ENCODE measurements at regions of chr16 and their contacts with region 1.

Region 1: GRCh38 chr16:11407047-11407982 is 62.1 kb downstream of the RMI2 start:
- DNase-seq: peak; percentile 81
- H3K4me3 Mint-ChIP-seq: no peak overlapping the region
- H3K27ac Mint-ChIP-seq: no peak overlapping the region
- H3K4me1 Mint-ChIP-seq: no peaks in the 10 kb centered on the region
- H3K27me3 Mint-ChIP-seq: peaks cover 11% of the 10 kb centered on the region
- CTCF ChIP-seq: peak; percentile 72

Region 2: DNA sequence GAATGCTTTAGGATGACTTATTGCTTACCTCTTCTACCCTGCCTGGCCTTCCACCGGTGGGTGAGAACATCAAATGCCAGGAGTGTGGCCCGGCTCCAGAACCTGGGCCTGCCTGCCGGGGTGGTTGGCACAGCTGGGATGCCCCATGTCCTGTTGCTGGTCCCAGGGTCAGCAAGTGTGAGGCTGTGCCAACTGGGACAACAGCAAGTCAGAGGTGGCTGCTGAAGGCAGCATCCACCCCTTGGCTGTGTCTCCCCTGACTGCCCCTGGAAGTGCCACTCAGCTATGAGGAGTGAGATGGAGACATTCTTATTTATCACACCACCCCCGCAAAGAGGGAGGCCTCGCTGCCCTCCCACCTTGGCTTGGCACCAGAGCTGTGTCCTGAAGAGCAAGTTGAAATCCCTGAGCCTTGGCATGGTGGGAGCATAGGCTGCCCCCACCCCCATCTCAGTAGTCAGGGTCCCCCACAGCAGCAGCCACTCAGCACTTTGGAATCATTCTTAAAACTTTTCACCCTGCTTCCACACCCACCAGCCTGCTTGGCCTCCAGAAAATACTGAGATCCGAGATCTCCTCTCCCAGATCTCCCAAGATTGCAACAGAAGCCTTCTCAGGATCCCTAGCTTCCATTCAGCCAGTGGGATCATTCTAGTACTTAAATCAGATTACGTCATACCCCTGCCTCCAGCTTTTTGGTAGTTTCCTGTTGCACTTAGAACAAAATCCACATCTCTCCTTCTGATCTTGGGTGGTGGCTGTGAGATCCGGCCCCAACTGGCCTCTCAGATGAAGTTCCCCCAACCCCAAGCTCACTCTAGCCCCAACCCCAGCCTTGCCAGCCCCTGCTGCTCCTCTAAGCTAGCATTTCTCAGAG is 278.8 kb before region 1 on chr16:
- CTCF ChIA-PET with region 1: no interaction called
- POLR2A ChIA-PET with region 1: no interaction called
- intact Hi-C with region 1: no loop called
- DNase-seq: peak; percentile 61
- H3K4me3 Mint-ChIP-seq: no peak overlapping the region
- H3K27ac Mint-ChIP-seq: peak overlapping the region; percentile 46
- H3K4me1 Mint-ChIP-seq: peaks cover 14% of the 10 kb centered on the region
- H3K27me3 Mint-ChIP-seq: no peaks in the 10 kb centered on the region
- CTCF ChIP-seq: no peak

Region 3: DNA sequence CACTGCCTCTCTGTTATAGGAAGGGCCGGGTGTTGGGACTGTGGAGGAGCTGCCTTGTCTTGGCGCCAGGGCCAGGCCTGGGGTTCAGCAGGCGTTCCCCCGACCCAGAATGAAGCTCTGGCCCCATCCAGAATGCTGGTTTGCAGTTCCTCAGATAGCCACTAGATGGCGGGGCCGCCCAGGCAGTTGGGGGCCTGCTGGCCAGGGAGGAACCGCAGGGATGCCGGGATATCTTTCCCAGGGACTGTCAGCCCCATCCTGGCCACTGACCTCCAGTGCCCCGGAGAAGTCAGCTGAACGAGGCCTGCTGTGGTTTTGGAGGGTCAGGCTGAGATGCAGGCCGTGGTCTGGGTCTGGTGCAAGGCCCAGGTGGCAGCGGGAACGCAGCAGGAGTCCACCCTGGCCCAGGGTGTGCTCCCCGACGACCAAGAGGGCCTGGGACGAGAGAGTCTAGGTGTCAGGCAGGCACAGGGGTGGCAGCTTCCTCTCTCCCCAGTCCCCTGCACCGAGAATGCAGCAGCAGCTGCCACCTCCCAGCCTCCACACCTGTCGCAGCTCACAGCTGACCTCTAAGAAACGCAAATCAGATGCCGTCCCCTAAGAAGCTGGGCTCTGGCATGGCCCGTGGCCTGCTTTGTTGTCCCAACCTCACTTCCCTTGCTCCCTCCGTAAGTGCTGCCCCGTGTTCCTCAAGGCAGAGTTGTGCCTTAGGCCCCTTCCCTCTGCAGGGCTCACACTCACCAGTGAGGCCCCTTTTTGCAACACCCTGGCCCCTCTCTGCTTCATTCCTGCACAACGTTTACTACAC is 10.9 kb before region 1 on chr16:
- CTCF ChIA-PET with region 1: interaction called, 70 read pairs
- POLR2A ChIA-PET with region 1: interaction called, 3 read pairs
- intact Hi-C with region 1: no loop called
- DNase-seq: peak; percentile 63
- H3K4me3 Mint-ChIP-seq: no peak overlapping the region
- H3K27ac Mint-ChIP-seq: no peak overlapping the region
- H3K4me1 Mint-ChIP-seq: no peaks in the 10 kb centered on the region
- H3K27me3 Mint-ChIP-seq: no peaks in the 10 kb centered on the region
- CTCF ChIP-seq: peak; percentile 99

Region 4: DNA sequence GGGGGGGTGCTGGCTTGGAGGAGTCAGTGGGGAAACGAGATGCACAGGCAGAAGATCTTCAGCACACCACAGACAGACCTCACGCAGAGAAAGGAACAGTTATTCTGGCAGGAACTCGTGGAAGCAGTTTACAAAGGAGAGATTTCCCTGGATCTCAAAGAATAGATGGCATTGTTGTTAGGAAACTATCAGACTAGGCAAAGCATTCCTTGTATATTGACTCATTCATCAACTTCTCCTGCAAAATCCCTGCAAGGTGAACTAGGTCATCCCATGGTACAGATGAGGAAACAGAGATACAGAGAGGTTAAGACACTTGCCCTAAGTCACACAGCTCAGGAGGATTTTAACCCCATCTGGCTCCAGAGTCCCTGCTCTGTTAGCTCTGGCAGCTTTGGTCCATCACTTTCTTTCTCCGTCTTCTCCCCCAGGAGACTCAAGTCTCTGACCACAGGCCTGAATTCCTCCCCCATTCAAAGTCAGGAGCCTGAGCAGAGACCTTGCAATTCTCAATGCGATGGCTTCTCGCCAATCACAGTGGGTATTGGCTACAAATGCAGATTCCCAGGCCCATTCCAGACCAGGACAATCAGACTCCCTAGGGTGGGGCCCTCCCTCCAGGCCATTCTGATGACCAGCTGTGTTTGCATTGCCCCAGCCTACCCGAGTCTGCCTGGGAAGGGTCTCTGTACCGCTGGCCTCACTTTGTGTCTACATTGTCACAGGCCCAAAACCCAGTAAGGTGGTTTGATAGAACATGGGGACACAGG is 123.0 kb after region 1 on chr16:
- CTCF ChIA-PET with region 1: interaction called, 36 read pairs
- POLR2A ChIA-PET with region 1: interaction called, 6 read pairs
- intact Hi-C with region 1: loop called (anchors 5 kb)
- DNase-seq: no peak
- H3K4me3 Mint-ChIP-seq: no peak overlapping the region
- H3K27ac Mint-ChIP-seq: no peak overlapping the region
- H3K4me1 Mint-ChIP-seq: peaks cover 16% of the 10 kb centered on the region
- H3K27me3 Mint-ChIP-seq: no peaks in the 10 kb centered on the region
- CTCF ChIP-seq: no peak

Region 5: DNA sequence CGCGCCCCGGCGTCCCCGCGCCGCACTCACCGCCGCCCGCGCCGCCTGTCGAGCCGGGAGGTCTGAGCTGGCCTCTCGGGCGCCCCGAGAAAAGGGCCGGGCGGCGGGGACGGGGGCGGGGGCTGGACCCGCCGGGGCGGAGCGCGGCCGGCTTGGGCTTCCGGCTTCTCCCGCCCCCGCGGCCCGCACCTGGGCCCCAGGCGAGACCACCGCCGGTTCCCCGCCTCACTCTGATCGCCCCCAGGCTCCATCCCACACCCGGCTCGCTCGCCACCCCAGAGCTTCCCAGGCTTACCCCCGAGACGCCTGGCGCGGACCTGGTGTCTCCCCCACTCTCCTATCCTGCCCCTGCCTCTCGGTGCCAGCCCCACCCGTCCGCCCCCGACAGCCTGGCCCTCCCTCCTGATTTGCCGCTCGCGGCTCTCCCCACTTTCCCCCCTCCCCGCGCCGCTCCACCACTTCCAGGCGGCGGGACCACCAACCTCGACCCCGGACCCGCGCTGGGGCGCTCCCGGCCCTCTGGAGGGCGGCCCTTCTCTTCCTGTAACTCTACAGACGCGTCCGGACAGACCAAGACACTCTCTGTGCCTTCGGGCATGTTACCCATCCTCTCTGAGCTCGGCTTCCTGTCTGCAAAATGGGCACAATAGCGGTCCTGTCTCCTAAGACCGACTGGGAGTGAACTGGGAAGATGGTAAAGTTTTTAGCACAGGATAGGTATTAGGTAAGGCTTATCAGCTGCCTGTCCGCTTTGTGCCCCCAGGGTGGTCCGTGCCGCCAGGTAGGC is 179.7 kb after region 1 on chr16 and contains the start of gene LITAF:
- CTCF ChIA-PET with region 1: interaction called, 9 read pairs
- POLR2A ChIA-PET with region 1: interaction called, 3 read pairs
- intact Hi-C with region 1: loop called (anchors 1 kb)
- DNase-seq: peak; percentile 66
- H3K4me3 Mint-ChIP-seq: peak within 1 kb of the TSS; percentile 84
- H3K27ac Mint-ChIP-seq: peak within 1 kb of the TSS; percentile 96
- H3K4me1 Mint-ChIP-seq: peaks cover 31% of the 10 kb centered on the region
- H3K27me3 Mint-ChIP-seq: no peaks in the 10 kb centered on the region
- CTCF ChIP-seq: no peak
- total RNA-seq, gene LITAF: 120 and 161 TPM in 2 replicates

Region 6: DNA sequence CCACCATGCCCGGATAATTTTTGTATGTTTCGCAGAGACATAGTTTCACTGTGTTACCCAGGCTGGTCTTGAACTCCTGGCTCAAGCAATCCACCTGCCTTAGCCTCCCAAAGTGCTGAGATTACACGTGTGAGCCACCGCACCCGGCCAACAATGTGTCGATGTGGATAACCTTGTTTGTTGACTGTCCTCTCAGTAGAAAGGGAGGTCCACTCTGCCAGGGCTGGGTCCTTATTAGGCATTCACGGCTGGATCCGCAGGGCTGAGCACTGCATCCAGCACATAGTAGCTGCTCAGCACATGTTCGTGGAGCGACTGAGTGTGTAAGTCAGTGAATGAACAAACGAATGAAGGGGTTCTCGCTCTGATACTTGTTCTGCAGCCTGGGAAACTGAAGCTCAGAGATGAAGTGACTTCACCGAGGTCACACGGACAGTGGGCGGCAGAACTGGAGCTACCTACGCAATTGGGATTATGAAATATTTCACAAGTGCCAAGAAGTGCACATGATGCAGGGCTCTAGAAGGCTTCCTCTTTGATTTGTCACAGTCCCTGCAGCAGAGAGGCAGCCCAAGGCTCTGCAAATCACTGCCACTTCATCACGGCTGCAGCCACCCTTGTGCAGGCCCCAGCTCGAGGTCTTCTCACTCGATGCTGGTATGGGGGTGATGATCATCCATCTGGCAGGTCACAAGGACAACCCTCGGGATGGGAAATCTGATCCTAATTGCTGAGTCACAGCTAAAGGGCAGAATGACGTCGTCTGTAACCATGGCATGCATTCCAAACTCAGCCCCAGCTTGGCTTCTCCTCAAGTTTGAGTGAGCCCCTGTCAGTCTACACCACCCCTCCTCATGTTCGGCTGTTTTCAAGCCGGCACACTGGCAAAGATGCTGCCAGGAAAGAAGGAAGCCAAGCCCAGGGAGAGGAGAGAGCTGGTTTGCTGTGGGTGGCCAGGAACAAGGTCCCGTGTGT is 232.9 kb after region 1 on chr16:
- CTCF ChIA-PET with region 1: interaction called, 123 read pairs
- POLR2A ChIA-PET with region 1: interaction called, 12 read pairs
- intact Hi-C with region 1: loop called (anchors 1 kb)
- DNase-seq: peak; percentile 97
- H3K4me3 Mint-ChIP-seq: peak overlapping the region; percentile 44
- H3K27ac Mint-ChIP-seq: peak overlapping the region; percentile 89
- H3K4me1 Mint-ChIP-seq: peaks cover 23% of the 10 kb centered on the region
- H3K27me3 Mint-ChIP-seq: no peaks in the 10 kb centered on the region
- CTCF ChIP-seq: no peak

Region 7: GRCh38 chr16:11689031-11689761 is 281.9 kb after region 1 on chr16:
- CTCF ChIA-PET with region 1: interaction called, 13 read pairs
- POLR2A ChIA-PET with region 1: interaction called, 4 read pairs
- intact Hi-C with region 1: no loop called
- DNase-seq: no peak
- H3K4me3 Mint-ChIP-seq: no peak overlapping the region
- H3K27ac Mint-ChIP-seq: no peak overlapping the region
- H3K4me1 Mint-ChIP-seq: no peaks in the 10 kb centered on the region
- H3K27me3 Mint-ChIP-seq: no peaks in the 10 kb centered on the region
- CTCF ChIP-seq: no peak

Region 8: DNA sequence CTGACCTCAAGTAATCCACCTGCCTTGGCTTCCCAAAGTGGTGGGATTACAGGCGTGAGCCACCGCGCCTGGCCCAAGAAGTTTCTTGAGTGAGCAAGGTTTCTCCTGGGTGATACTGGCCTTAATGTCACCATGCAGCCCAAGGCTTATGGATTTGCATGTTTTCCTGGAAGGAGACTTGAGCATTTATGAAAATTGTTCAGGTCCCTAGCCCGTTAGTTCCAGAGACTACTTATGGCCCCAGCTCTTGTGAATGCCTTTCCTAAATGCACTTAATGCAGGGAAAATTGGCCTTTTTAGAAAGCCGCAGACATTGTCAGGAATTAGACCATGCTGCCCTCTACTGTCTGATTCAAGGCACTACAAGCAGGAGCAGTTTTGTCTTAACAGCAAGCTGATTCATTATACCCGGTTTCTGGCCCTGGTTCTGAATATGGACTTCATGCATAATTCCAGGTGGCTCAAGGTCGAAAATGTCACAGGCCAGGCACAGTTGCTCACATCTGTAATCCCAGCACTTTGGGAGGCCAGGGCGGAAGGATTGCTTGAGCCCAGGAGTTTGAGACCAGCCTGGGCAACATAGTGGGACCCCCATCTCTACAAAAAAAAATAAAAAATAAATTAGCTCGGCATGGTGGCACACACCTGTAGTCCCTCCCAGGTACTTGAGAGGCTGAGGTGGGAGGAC is 660.5 kb after region 1 on chr16:
- CTCF ChIA-PET with region 1: interaction called, 7 read pairs
- POLR2A ChIA-PET with region 1: no interaction called
- intact Hi-C with region 1: loop called (anchors 5 kb)
- DNase-seq: peak; percentile 80
- H3K4me3 Mint-ChIP-seq: no peak overlapping the region
- H3K27ac Mint-ChIP-seq: no peak overlapping the region
- H3K4me1 Mint-ChIP-seq: peaks cover 1% of the 10 kb centered on the region
- H3K27me3 Mint-ChIP-seq: no peaks in the 10 kb centered on the region
- CTCF ChIP-seq: peak; percentile 90